ENCODE measurements at regions of chr16 and their contacts with region 1.

Region 1: GRCh38 chr16:85821441-85822135 is 22.1 kb downstream of the COX4I1 start:
- DNase-seq: peak; percentile 41
- ATAC-seq: peak; percentile 94
- H3K4me3 ChIP-seq: no peak overlapping the region
- H3K27ac ChIP-seq: no peak overlapping the region
- H3K4me1 ChIP-seq: peaks cover 18% of the 10 kb centered on the region
- H3K27me3 ChIP-seq: no peaks in the 10 kb centered on the region
- CTCF ChIP-seq: peak; percentile 91 to 99 (median 93)
- EP300 ChIP-seq: 0 out of 4 replicates have a peak, but pooled peaks of 1 of the 2 experiments have one; percentile 16
- POLR2A ChIP-seq: no peak
- RAD21 ChIP-seq: peak; percentile 99

Region 2: DNA sequence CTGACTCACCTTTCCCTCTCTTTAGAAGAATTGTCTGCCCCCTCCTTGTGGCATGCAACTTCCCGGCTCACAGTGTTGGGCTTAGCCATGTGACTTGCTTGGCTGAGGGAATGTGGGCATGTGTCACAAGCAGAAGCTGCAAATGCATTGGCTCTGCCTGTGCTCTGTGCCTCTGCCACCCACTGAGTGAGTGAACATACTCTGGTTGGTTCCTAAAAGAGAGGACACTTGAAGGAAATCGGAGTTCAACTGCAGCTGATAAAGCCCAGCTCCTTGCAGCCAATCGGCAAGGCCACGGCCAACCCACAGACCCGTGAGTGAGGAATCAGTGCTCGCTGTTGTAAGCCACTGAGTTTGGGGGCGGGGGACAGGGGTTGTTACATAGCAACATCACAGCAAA is 122.0 kb before region 1 on chr16:
- CTCF ChIA-PET with region 1: no interaction called
- POLR2A ChIA-PET with region 1: no interaction called
- RAD21 ChIA-PET with region 1: no interaction called
- SMC1A ChIA-PET with region 1: no interaction called
- in situ Hi-C with region 1: no loop called
- intact Hi-C with region 1: no loop called
- DNase-seq: no peak
- ATAC-seq: no peak
- H3K4me3 ChIP-seq: no peak overlapping the region
- H3K27ac ChIP-seq: no peak overlapping the region
- H3K4me1 ChIP-seq: no peaks in the 10 kb centered on the region
- H3K27me3 ChIP-seq: peaks cover 1 to 2% of the 10 kb centered on the region in 2 experiments; a peak in 3 of 4 replicates
- CTCF ChIP-seq: no peak
- EP300 ChIP-seq: no peak
- POLR2A ChIP-seq: no peak
- RAD21 ChIP-seq: no peak

Region 3: DNA sequence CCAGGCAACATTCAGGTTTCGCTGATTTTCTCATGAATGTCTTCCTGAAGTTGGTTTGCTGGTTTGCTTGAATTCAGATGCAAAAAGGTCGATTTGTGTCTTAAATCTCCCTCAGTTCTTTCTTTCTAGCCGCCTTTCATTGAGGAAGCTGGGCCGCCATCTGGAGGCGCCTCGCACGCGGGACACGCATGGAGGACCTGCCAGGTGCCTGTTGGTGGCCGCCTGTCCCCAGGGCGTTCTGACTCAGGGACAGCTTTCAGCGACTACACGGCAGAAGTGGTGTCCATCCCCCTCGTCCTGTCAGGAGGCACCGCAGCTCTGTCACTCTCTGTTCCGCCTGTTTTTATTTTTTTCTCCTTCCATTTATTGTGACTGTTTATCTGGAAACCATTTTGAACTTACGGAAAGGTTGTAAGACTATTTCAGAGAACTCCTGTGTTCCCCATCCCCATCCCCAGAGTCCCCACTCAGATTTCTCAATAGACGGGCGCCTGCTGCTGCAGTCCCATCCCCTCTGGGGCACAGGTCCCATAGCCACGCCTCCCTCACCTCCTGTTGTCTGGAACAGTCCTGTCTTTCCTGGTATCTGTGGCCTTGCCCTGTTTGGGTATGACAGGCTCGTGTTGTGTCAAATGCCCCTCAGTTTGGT is 11.1 kb after region 1 on chr16:
- CTCF ChIA-PET with region 1: interaction called, 10 read pairs
- POLR2A ChIA-PET with region 1: no interaction called
- RAD21 ChIA-PET with region 1: interaction called, 5 read pairs
- SMC1A ChIA-PET with region 1: interaction called, 4 read pairs
- in situ Hi-C with region 1: no loop called
- intact Hi-C with region 1: no loop called
- DNase-seq: no peak
- ATAC-seq: peak; percentile 93
- H3K4me3 ChIP-seq: no peak overlapping the region
- H3K27ac ChIP-seq: no peak overlapping the region
- H3K4me1 ChIP-seq: peaks cover 12% of the 10 kb centered on the region
- H3K27me3 ChIP-seq: peaks cover 2 to 3% of the 10 kb centered on the region in 2 experiments; a peak in 3 of 4 replicates
- CTCF ChIP-seq: peak in 2 of 3 experiments; percentile 6 to 22; a peak in 1 of 6 replicates
- EP300 ChIP-seq: no peak
- POLR2A ChIP-seq: no peak
- RAD21 ChIP-seq: no peak

Region 4: DNA sequence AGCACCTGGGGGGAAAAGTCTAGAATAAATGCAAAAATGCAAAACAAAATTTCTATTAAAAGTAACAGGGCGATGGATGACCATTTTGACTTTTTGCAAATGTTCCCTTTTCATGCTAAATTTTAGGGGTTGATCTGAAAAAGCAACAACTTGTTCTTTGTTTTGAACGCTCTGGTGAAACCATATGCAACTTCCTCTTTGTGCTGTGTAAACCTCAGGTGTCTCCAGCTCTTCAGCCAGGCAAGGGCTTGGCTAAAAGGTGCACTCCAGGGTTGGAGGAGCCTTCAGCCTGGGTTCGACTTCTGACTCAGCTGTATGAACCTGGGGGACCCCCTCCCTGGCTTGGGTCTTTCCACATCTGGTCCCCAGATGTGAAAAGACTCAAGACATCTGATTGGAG is 86.9 kb after region 1 on chr16:
- CTCF ChIA-PET with region 1: interaction called, 295 read pairs
- POLR2A ChIA-PET with region 1: interaction called, 3 read pairs
- RAD21 ChIA-PET with region 1: interaction called, 211 read pairs
- SMC1A ChIA-PET with region 1: interaction called, 187 read pairs
- in situ Hi-C with region 1: loop called (anchors 5 kb)
- intact Hi-C with region 1: loop called (anchors 2 kb)
- DNase-seq: peak; percentile 59
- ATAC-seq: peak; percentile 61
- H3K4me3 ChIP-seq: peak overlapping the region; percentile 41
- H3K27ac ChIP-seq: peak overlapping the region; percentile 45
- H3K4me1 ChIP-seq: peaks cover 83% of the 10 kb centered on the region
- H3K27me3 ChIP-seq: no peaks in the 10 kb centered on the region
- CTCF ChIP-seq: no peak
- EP300 ChIP-seq: 0 out of 4 replicates have a peak, but pooled peaks of 1 of the 2 experiments have one; percentile 1
- POLR2A ChIP-seq: peak; percentile 48
- RAD21 ChIP-seq: no peak

Region 5: DNA sequence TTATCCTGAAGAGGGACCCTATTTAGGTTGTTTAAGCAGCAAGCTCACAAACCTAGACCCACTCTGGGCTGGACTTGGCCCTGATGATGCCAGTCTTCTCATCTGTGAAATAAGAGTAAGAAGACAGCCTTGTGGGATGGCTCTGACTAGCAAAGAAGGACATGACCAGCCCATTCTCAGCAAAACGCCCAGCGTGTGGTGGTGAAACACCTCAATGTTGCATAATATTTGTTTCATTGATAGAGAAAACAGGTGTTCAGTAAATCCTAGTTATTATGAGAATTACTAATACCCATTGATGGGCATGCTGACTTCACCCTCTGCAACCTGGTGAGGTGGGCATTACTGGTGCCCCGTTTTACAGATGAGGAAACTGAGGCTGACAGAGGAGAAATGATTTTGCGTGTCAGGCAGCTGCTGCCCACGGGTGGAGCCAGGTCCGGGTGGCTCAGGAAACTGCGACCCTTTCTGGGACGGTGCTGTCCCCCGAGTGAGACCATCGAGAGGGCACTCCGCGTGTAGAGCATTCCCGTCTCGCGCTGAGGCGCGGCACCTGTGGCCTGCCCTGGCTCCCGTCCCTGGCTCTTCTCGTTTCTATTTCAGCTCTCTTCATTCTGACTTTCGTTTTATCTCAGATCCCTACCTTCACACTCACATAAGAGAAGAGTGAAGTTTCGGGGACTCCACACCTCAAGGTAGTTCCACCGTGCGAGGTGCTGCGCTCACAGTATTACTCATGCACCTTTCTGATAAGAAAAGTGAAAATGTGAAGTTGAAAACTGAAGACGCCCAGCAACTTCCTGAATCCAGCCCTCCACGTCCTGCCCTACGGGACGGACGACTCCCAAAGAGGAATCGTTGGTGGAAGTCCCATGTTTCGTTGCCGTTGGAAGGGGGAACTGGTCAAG is 125.9 kb after region 1 on chr16:
- CTCF ChIA-PET with region 1: interaction called, 8 read pairs
- POLR2A ChIA-PET with region 1: no interaction called
- RAD21 ChIA-PET with region 1: interaction called, 6 read pairs
- SMC1A ChIA-PET with region 1: interaction called, 12 read pairs
- in situ Hi-C with region 1: no loop called
- intact Hi-C with region 1: no loop called
- DNase-seq: peak; percentile 90
- ATAC-seq: peak; percentile 89
- H3K4me3 ChIP-seq: peak overlapping the region; percentile 69
- H3K27ac ChIP-seq: peak overlapping the region; percentile 95
- H3K4me1 ChIP-seq: peaks cover 64% of the 10 kb centered on the region
- H3K27me3 ChIP-seq: no peaks in the 10 kb centered on the region
- CTCF ChIP-seq: no peak
- EP300 ChIP-seq: peak; percentile 60 to 68; a peak in 3 of 4 replicates
- POLR2A ChIP-seq: peak; percentile 64; the same call in 1 of the 2 replicates
- RAD21 ChIP-seq: peak; percentile 28; the same call in 1 of the 2 replicates

Region 6: GRCh38 chr16:86002178-86002900 is 180.8 kb after region 1 on chr16:
- CTCF ChIA-PET with region 1: interaction called, 345 read pairs
- POLR2A ChIA-PET with region 1: no interaction called
- RAD21 ChIA-PET with region 1: interaction called, 6 read pairs
- SMC1A ChIA-PET with region 1: interaction called, 7 read pairs
- in situ Hi-C with region 1: no loop called
- intact Hi-C with region 1: no loop called
- DNase-seq: peak; percentile 76
- ATAC-seq: peak; percentile 85
- H3K4me3 ChIP-seq: no peak overlapping the region
- H3K27ac ChIP-seq: peak overlapping the region; percentile 81
- H3K4me1 ChIP-seq: peaks cover 49% of the 10 kb centered on the region
- H3K27me3 ChIP-seq: no peaks in the 10 kb centered on the region
- CTCF ChIP-seq: no peak
- EP300 ChIP-seq: no peak
- POLR2A ChIP-seq: peak; percentile 59
- RAD21 ChIP-seq: 0 out of 2 replicates have a peak, but pooled peaks have one; percentile 2

Region 7: DNA sequence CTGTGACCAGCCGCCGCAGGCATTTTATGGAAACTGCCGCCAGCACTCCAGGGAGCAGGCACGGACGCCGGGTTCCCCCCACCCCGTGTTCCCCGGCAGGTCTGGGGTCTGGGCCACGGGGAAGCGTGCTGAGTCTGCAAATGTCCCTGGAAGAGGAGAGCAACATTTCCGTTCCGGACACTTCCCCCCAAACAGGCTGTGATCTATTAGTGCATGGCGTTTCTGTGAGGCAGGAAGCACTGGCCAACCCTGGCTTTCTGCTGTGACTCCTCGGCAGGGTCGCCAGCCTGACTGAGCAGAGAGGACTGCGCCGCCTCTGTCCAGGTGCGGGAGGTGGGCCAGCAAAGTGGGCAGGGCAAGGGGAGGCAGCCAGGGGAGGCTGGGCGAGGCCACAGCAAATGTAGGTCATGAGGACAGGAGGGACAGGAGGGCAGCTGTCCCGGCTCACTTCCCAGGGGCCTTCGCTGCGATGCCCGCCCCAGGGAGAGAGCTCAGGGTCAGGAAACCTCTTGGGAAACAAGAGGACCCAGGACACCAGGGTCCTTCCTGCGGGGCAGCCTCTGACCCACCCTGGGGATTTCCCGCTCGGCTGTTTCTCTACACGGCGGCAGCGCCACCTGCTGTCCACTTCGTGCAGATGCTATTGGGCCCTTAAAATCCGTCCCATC is 698.2 kb after region 1 on chr16:
- CTCF ChIA-PET with region 1: interaction called, 27 read pairs
- POLR2A ChIA-PET with region 1: no interaction called
- RAD21 ChIA-PET with region 1: interaction called, 7 read pairs
- SMC1A ChIA-PET with region 1: interaction called, 5 read pairs
- in situ Hi-C with region 1: loop called (anchors 5 kb)
- intact Hi-C with region 1: loop called (anchors 1 kb)
- DNase-seq: no peak
- ATAC-seq: peak; percentile 76
- H3K4me3 ChIP-seq: no peak overlapping the region
- H3K27ac ChIP-seq: no peak overlapping the region
- H3K4me1 ChIP-seq: no peaks in the 10 kb centered on the region
- H3K27me3 ChIP-seq: peaks cover 5 to 9% of the 10 kb centered on the region in 2 experiments
- CTCF ChIP-seq: peak; percentile 86 to 92 (median 87)
- EP300 ChIP-seq: no peak
- POLR2A ChIP-seq: no peak
- RAD21 ChIP-seq: peak; percentile 79